ENCODE measurements at regions of chr2 and their contacts with region 1.

Region 1: GRCh38 chr2:84919885-84920580 is 14.6 kb downstream of the TMSB10 start:
- DNase-seq: no peak
- ATAC-seq: peak; percentile 64
- H3K4me3 ChIP-seq: peak overlapping the region; percentile 4
- H3K27ac ChIP-seq: peak overlapping the region; percentile 74
- H3K4me1 ChIP-seq: peaks cover 30% of the 10 kb centered on the region
- H3K27me3 ChIP-seq: no peaks in the 10 kb centered on the region
- CTCF ChIP-seq: no peak
- EP300 ChIP-seq: no peak
- POLR2A ChIP-seq: no peak
- RAD21 ChIP-seq: no peak

Region 2: GRCh38 chr2:84888401-84889276 is 31.4 kb before region 1 on chr2:
- CTCF ChIA-PET with region 1: interaction called, 133 read pairs
- POLR2A ChIA-PET with region 1: interaction called, 10 read pairs
- RAD21 ChIA-PET with region 1: interaction called, 74 read pairs
- SMC1A ChIA-PET with region 1: interaction called, 83 read pairs
- in situ Hi-C with region 1: no loop called
- intact Hi-C with region 1: no loop called
- DNase-seq: peak; percentile 70
- ATAC-seq: peak; percentile 99
- H3K4me3 ChIP-seq: peak overlapping the region; percentile 54
- H3K27ac ChIP-seq: peak overlapping the region; percentile 85
- H3K4me1 ChIP-seq: peaks cover 13% of the 10 kb centered on the region
- H3K27me3 ChIP-seq: no peaks in the 10 kb centered on the region
- CTCF ChIP-seq: no peak
- EP300 ChIP-seq: peak in 1 of 2 experiments; percentile 61; a peak in 1 of 4 replicates
- POLR2A ChIP-seq: 0 out of 2 replicates have a peak, but pooled peaks have one; percentile 37
- RAD21 ChIP-seq: no peak

Region 3: GRCh38 chr2:84894758-84895520 is 25.1 kb before region 1 on chr2:
- CTCF ChIA-PET with region 1: interaction called, 32 read pairs
- POLR2A ChIA-PET with region 1: interaction called, 10 read pairs
- RAD21 ChIA-PET with region 1: interaction called, 43 read pairs
- SMC1A ChIA-PET with region 1: interaction called, 31 read pairs
- in situ Hi-C with region 1: no loop called
- intact Hi-C with region 1: no loop called
- DNase-seq: no peak
- ATAC-seq: peak; percentile 17
- H3K4me3 ChIP-seq: no peak overlapping the region
- H3K27ac ChIP-seq: peak overlapping the region; percentile 4; the same call in 1 of the 2 replicates
- H3K4me1 ChIP-seq: peaks cover 34% of the 10 kb centered on the region
- H3K27me3 ChIP-seq: no peaks in the 10 kb centered on the region
- CTCF ChIP-seq: no peak
- EP300 ChIP-seq: no peak
- POLR2A ChIP-seq: no peak
- RAD21 ChIP-seq: no peak

Region 4: GRCh38 chr2:85648619-85649018 is 728.6 kb after region 1 on chr2:
- CTCF ChIA-PET with region 1: no interaction called
- POLR2A ChIA-PET with region 1: no interaction called
- RAD21 ChIA-PET with region 1: no interaction called
- SMC1A ChIA-PET with region 1: no interaction called
- in situ Hi-C with region 1: no loop called
- intact Hi-C with region 1: no loop called
- DNase-seq: no peak
- ATAC-seq: peak; percentile 83
- H3K4me3 ChIP-seq: no peak overlapping the region
- H3K27ac ChIP-seq: no peak overlapping the region
- H3K4me1 ChIP-seq: peaks cover 13% of the 10 kb centered on the region
- H3K27me3 ChIP-seq: no peaks in the 10 kb centered on the region
- CTCF ChIP-seq: peak; percentile 28 to 52 (median 49); a peak in 5 of 6 replicates
- EP300 ChIP-seq: no peak
- POLR2A ChIP-seq: no peak
- RAD21 ChIP-seq: peak; percentile 33